A549 (cell line): ENCODE measurements at regions of chr12 and their contacts with region 1.

Region 1: DNA sequence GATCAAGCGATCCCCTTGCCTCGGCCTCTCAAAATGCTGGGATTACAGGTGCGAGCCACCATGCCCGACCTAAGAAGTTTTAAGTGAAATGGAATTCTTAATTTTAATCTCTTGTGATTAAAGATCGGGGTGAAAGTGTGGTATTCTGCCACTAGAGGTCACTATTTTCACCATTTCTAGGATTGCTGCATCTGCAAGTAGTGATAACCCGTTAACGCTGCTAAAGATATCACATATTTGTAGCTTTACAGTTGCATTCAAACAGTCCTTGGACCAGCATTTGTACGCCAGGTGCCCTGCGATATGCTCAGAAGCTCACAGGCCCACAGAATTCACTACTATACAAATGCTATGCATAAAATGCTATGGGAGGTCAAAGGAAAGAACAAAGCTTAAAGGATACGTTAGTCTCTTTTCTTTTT is 19.3 kb downstream of the CCDC62 start:
- DNase-seq: peak; percentile 63 to 73
- ATAC-seq: peak; percentile 89 to 90
- H3K4me3 ChIP-seq: no peak overlapping the region
- H3K27ac ChIP-seq: no peak overlapping the region
- H3K4me1 ChIP-seq: no peaks in the 10 kb centered on the region
- CTCF ChIP-seq: peak; percentile 86
- EP300 ChIP-seq: no peak
- POLR2A ChIP-seq: no peak
- RAD21 ChIP-seq: peak; percentile 80 to 86

Region 2: GRCh38 chr12:122526683-122527477 is 266.8 kb before region 1 on chr12 and contains the starts of genes KNTC1 and RSRC2:
- CTCF ChIA-PET with region 1: no interaction called
- POLR2A ChIA-PET with region 1: no interaction called
- DNase-seq: peak; percentile 99 to 100
- ATAC-seq: peak; percentile 92 to 93
- H3K4me3 ChIP-seq: peak within 1 kb of the TSS; percentile 69
- H3K27ac ChIP-seq: peak within 1 kb of the TSS; percentile 95
- H3K4me1 ChIP-seq: peaks cover 28% of the 10 kb centered on the region
- CTCF ChIP-seq: no peak
- EP300 ChIP-seq: no peak
- POLR2A ChIP-seq: peak; percentile 92
- RAD21 ChIP-seq: peak in 1 of 2 experiments; percentile 3; a peak in 1 of 5 replicates
- polyA plus RNA-seq, gene KNTC1: 61.1 and 68.7 TPM in 2 replicates
- polyA plus RNA-seq, gene RSRC2: 43.0 and 83.3 TPM in 2 replicates

Region 3: DNA sequence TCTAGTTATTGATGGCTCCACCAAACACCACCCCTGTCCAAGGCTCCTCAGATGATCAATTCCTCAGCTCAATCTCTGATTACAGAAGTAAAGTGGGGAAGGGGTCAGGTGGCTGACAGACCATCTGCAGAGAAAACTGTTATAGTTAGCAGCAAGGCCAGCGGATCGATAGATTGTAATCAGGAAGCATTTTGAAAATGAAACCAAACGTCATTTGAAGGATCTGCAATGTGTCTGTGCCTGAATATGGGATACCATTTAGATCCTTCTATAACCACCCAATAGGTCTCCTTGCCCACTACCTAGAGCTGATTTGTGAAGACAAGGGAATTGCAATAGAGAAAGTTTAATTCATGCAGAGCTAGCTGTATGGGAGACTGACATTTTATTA is 102.1 kb before region 1 on chr12:
- CTCF ChIA-PET with region 1: no interaction called
- POLR2A ChIA-PET with region 1: no interaction called
- DNase-seq: no peak
- ATAC-seq: no peak
- H3K4me3 ChIP-seq: no peak overlapping the region
- H3K27ac ChIP-seq: no peak overlapping the region
- H3K4me1 ChIP-seq: 0 out of 3 replicates have a peak, but pooled peaks cover 4% of the 10 kb centered on the region
- CTCF ChIP-seq: no peak
- EP300 ChIP-seq: no peak
- POLR2A ChIP-seq: no peak
- RAD21 ChIP-seq: no peak

Region 4: DNA sequence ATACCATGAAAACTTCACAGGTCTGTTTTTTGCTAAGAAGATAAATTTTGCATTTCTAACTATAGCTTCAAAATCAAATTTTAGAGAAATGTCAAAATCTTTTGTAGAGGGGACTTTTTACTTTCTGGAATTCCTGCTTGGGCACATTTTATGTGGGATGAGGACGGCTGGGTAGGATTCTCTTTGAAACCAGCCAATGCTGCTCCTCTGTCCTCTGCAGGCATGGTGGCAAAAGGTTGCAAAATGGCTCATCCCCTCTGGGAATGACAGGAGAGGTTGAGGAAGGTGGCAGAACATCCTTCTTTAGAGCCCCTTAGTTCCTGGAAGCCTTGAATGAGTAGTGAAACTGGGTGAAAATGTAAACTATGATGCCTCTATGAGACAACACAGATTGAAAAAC is 26.0 kb before region 1 on chr12:
- CTCF ChIA-PET with region 1: interaction called, 14 read pairs
- POLR2A ChIA-PET with region 1: no interaction called
- DNase-seq: no peak
- ATAC-seq: no peak
- H3K4me3 ChIP-seq: no peak overlapping the region
- H3K27ac ChIP-seq: no peak overlapping the region
- H3K4me1 ChIP-seq: no peaks in the 10 kb centered on the region
- CTCF ChIP-seq: no peak
- EP300 ChIP-seq: no peak
- POLR2A ChIP-seq: no peak
- RAD21 ChIP-seq: no peak

Region 5: GRCh38 chr12:122813310-122813713 is 19.6 kb after region 1 on chr12:
- CTCF ChIA-PET with region 1: interaction called, 33 read pairs
- POLR2A ChIA-PET with region 1: no interaction called
- DNase-seq: no peak
- ATAC-seq: peak in 1 of 2 experiments; percentile 23; a peak in 2 of 6 replicates
- H3K4me3 ChIP-seq: no peak overlapping the region
- H3K27ac ChIP-seq: no peak overlapping the region
- H3K4me1 ChIP-seq: no peaks in the 10 kb centered on the region
- CTCF ChIP-seq: no peak
- EP300 ChIP-seq: no peak
- POLR2A ChIP-seq: no peak
- RAD21 ChIP-seq: no peak

Region 6: GRCh38 chr12:122834104-122834920 is 40.6 kb after region 1 on chr12:
- CTCF ChIA-PET with region 1: interaction called, 50 read pairs
- POLR2A ChIA-PET with region 1: no interaction called
- DNase-seq: peak; percentile 79 to 82
- ATAC-seq: peak; percentile 74 to 84
- H3K4me3 ChIP-seq: peak overlapping the region; percentile 98
- H3K27ac ChIP-seq: peak overlapping the region; percentile 82 to 87
- H3K4me1 ChIP-seq: peaks cover 26% of the 10 kb centered on the region
- CTCF ChIP-seq: peak; percentile 23; the same call in 1 of the 3 replicates
- EP300 ChIP-seq: no peak
- POLR2A ChIP-seq: no peak
- RAD21 ChIP-seq: no peak

Region 7: GRCh38 chr12:122946690-122947341 is 153.1 kb after region 1 on chr12:
- CTCF ChIA-PET with region 1: interaction called, 37 read pairs
- POLR2A ChIA-PET with region 1: interaction called, 10 read pairs
- DNase-seq: peak; percentile 92 to 96
- ATAC-seq: peak; percentile 86 to 88
- H3K4me3 ChIP-seq: no peak overlapping the region
- H3K27ac ChIP-seq: peak overlapping the region; percentile 76 to 87
- H3K4me1 ChIP-seq: peaks cover 68% of the 10 kb centered on the region
- CTCF ChIP-seq: 0 out of 3 replicates have a peak, but pooled peaks have one; percentile 16
- EP300 ChIP-seq: peak; percentile 22 to 39; a peak in 2 of 5 replicates
- POLR2A ChIP-seq: no peak
- RAD21 ChIP-seq: peak; percentile 11 to 32; a peak in 2 of 5 replicates

Region 8: GRCh38 chr12:122958198-122958888 is 164.6 kb after region 1 on chr12:
- CTCF ChIA-PET with region 1: interaction called, 24 read pairs
- POLR2A ChIA-PET with region 1: no interaction called
- DNase-seq: no peak
- ATAC-seq: no peak
- H3K4me3 ChIP-seq: no peak overlapping the region
- H3K27ac ChIP-seq: no peak overlapping the region
- H3K4me1 ChIP-seq: 0 out of 3 replicates have a peak, but pooled peaks cover 4% of the 10 kb centered on the region
- CTCF ChIP-seq: no peak
- EP300 ChIP-seq: no peak
- POLR2A ChIP-seq: no peak
- RAD21 ChIP-seq: no peak

Region 9: DNA sequence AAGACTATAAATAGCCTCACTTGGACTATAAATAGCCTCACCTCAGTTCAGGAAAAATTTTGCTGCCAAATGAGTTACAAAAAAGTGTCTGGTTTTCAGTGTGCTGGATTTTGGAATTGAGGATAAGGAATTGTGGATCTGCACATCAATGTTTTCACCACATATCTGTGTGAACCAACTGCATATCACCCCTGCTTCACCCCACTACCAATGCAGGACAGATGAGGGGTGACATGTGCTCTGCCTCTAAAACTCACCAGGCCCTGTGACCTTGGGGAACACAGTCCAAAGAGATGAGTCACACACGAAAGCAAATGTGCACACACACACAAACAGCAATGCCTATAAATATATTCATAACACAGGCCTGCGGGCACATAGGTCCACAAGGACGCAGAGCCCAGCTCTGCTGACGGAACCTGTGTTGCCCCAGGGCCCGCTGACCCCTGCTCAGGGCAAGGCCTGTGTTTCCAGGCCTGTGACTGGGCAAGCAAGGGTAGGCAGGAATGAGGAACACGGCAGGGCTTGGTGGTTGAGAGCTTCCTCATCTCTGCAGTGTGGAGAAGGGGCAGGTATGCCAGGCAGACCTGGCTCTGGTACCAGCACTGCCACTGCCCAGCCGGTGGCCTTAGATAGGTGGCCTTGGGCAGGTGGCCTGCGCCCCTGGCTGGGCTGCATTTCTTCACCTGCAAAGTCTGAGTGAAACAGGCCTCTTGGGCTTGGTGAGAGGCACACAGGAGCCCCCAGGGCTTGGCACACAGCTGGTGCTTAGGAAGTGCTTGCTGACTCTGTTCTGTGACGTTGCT is 269.2 kb after region 1 on chr12:
- CTCF ChIA-PET with region 1: no interaction called
- POLR2A ChIA-PET with region 1: no interaction called
- DNase-seq: peak; percentile 42 to 68
- ATAC-seq: peak; percentile 63 to 72
- H3K4me3 ChIP-seq: no peak overlapping the region
- H3K27ac ChIP-seq: peak overlapping the region; percentile 21 to 83; a peak in 5 of 6 replicates
- H3K4me1 ChIP-seq: peaks cover 22% of the 10 kb centered on the region
- CTCF ChIP-seq: no peak
- EP300 ChIP-seq: no peak
- POLR2A ChIP-seq: no peak
- RAD21 ChIP-seq: no peak